Activated T-helper 2 cell treated with anti-CD3 and anti-CD28 coated beads, Interferon-gamma antibody, Interleukin-2, Interleukin-4, amounts not matched to agents 10 μg/mL and 5 μg/mL and 100 μg/mL, durations not matched to agents 14 hours and 24 hours and 36 hours (primary cell): ENCODE measurements at regions of chr4 and their contacts with region 1.

Region 1: DNA sequence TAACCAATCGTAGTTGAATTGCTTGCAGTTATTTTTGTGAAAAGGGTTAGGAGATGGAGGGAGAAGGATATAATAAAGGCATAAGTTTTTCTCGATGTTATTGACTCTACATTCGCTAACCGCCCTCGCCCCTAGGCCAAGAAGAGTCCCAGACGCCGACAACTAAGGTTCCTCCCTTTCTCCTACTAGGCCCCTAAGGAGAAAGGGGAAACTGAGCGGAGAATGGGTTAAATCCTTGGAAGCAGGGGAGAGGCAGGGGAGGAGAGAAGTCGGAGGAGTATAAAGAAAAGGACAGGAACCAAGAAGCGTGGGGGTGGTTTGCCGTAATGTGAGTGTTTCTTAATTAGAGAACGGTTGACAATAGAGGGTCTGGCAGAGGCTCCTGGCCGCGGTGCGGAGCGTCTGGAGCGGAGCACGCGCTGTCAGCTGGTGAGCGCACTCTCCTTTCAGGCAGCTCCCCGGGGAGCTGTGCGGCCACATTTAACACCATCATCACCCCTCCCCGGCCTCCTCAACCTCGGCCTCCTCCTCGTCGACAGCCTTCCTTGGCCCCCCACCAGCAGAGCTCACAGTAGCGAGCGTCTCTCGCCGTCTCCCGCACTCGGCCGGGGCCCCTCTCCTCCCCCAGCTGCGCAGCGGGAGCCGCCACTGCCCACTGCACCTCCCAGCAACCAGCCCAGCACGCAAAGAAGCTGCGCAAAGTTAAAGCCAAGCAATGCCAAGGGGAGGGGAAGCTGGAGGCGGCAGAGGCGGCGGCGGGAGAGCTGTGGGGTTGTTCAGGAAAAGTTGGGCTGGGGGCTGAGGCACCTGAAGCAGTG is 5.9 kb downstream of the ATOH1 start:
- DNase-seq: no peak
- H3K4me3 Mint-ChIP-seq: no peak overlapping the region
- H3K27ac Mint-ChIP-seq: no peak overlapping the region
- H3K4me1 Mint-ChIP-seq: peaks cover 3% of the 10 kb centered on the region
- H3K27me3 Mint-ChIP-seq: peaks cover 55% of the 10 kb centered on the region

Region 2: DNA sequence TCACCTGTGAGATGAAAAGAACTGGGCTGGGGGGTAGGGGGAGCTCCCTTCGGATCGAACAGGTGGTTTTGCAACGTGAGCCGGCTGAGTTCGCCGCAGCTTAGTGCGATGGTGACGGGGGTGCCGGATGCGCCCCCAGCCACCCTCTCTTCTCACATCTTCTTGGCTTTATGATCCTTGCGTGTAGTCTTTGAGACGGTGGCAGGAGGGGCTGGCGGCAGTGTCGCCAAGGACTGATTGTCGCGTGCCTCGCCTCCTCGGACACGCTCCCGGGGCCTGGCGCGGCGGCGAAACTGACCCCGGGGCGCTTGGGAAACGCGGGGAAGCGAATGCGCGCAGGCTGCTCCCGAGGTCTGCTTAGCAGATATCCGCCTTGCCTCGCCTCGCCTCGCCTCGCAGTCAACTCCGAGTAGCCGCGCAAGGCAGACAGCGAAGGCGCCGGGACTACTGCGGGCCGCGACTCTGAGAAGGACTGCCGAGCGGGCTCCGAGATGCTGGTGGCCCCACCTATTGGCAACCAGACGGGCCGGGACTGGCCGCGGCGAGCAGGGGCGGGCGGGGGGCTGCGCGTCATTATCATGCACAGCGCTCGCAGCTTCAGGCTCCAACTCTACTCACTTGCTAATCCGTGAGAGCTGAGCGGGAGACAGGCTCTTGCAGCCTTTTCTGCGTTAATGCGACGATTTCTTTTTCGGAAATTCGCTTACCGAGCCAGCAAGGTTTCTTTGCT is 1529.1 kb before region 1 on chr4:
- intact Hi-C with region 1: loop called (anchors 10 kb)
- DNase-seq: no peak
- H3K4me3 Mint-ChIP-seq: no peak overlapping the region
- H3K27ac Mint-ChIP-seq: no peak overlapping the region
- H3K4me1 Mint-ChIP-seq: peaks cover 2% of the 10 kb centered on the region
- H3K27me3 Mint-ChIP-seq: peaks cover 25% of the 10 kb centered on the region

Region 3: DNA sequence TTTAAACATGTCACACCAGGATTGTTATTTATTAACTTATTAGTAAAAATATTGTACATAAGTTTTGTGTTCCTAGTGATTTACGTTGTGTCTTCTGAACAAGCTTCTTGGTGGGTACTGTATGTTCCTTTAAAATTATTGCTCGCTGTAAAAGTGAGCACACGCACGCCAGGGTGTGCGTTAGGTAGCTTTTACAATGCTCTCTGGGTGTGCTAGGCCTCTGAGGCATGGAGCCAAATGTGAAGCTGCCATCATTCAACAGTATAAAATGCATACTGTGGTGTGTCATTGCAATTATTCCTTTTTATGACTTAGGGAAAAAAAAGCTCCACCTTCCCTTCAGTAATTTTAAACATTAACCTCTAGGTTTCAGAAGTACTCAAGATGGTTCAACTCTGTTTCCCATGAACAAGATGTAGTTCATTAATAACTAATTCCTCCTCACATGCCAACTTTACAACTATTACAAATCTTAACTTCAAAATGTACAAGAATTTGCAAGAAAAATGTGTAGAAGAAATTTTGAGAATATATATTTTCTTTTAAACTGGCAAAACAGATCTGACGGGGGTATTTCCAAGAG is 36.5 kb after region 1 on chr4:
- intact Hi-C with region 1: no loop called
- DNase-seq: no peak
- H3K4me3 Mint-ChIP-seq: no peak overlapping the region
- H3K27ac Mint-ChIP-seq: no peak overlapping the region
- H3K4me1 Mint-ChIP-seq: no peaks in the 10 kb centered on the region
- H3K27me3 Mint-ChIP-seq: no peaks in the 10 kb centered on the region

Region 4: GRCh38 chr4:94262163-94263016 is 427.9 kb after region 1 on chr4:
- intact Hi-C with region 1: no loop called
- DNase-seq: no peak
- H3K4me3 Mint-ChIP-seq: no peak overlapping the region
- H3K27ac Mint-ChIP-seq: no peak overlapping the region
- H3K4me1 Mint-ChIP-seq: peaks cover 7% of the 10 kb centered on the region
- H3K27me3 Mint-ChIP-seq: no peaks in the 10 kb centered on the region

Region 5: DNA sequence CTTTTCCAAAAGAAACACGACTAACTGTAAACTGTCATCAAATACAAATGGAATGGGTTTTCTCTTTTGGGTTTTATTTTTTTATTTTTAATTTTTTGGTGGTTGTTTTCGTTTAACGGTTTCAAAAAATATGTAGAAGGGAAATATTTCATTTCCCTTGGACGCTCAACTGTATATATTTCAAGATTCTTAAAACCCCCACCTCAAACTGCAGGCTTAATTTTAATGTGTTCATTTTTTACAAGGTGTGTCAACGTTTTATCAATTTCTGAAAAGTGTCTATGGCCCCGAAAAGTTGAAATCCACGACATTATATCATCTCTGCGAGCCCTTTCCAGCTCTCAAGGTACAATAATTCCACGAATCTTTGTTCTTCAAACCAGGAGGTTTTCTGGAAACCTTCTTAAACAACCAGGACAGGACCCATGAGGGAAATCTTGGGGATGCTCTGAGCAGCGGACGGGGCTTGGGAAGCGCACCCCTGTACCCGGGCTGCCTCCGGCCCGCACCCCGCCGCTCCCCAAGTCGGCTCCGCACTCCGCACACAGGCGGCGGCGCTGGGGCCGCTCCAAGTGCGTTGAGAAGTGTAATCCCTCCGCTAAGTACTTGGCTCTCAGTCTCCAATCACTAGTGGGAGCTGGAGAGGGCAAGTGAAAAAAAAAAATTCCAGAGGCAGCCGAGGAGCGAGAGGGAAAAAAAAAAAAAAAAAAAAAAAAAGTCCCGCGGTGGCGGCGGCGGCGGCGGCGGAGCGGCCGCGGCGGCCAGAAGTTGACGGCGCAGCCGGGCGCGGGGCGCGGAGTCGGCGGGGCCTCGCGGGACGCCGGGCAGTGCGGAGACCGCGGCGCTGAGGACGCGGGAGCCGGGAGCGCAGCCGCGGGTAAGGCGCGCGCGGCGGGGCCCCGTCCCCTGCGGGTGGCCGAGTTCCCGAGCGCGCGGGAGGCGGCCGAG is 923.0 kb after region 1 on chr4 and contains the start of gene BMPR1B:
- intact Hi-C with region 1: loop called (anchors 5 kb)
- DNase-seq: no peak
- H3K4me3 Mint-ChIP-seq: peak within 1 kb of the TSS; percentile 65
- H3K27ac Mint-ChIP-seq: no peak within 1 kb of the TSS
- H3K4me1 Mint-ChIP-seq: peaks cover 6% of the 10 kb centered on the region
- H3K27me3 Mint-ChIP-seq: peaks cover 76% of the 10 kb centered on the region
- total RNA-seq, gene BMPR1B: not detected in 2 replicates